ENCODE measurements at regions of chr3 and their contacts with region 1.

Region 1: DNA sequence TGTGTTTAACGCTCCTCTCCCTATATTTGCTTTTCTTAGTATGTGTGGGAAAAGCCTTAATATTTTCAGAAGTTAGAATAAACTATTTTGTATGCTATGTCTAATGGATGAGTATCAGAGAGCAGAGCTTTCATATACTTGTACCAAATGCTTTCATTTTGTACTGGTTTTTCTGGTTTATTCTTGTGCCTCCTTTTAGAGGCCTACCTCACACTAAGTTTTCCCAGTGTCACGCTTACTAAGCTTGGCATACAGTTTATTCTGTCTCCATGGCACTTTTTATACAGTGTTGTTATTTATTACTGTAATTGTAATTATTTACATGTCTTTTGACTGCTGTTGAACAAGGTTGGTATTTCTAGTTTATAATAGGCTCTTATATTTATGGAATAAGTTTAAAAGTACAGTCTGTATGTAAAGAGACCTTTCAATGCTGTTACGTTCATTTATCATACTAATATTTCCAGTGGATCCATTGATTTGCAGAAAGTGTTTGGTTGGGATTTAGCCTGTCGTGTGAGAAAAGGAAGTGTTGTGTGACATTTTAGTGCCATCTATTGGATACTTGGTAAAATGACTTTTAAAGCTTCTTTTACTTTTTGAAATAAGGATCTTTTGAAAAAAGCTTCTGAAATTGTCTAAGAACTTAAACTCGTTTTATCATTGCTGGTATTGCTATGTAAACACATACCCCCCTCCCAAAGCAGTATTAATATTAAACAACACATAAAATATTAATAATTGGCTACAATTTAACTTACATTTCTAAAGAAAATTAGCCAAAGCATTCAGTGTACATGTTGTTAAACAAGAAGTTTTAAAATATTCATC is 5.2 kb upstream of the EBLN2 start:
- DNase-seq: no peak
- H3K4me3 ChIP-seq: no peak overlapping the region
- H3K27ac ChIP-seq: peak overlapping the region in 2 of 4 donors; percentile 42 to 45
- H3K4me1 ChIP-seq: peaks cover 7 to 19% (median 8%) of the 10 kb centered on the region in 3 donors
- H3K27me3 ChIP-seq: no peaks in the 10 kb centered on the region
- CTCF ChIP-seq: peak in 5 of 6 experiments; percentile 28 to 61 (median 41)
- POLR2A ChIP-seq: no peak

Region 2: GRCh38 chr3:72949016-72949415 is 107.2 kb before region 1 on chr3:
- intact Hi-C with region 1: loop called (anchors 10 kb)
- DNase-seq: no peak
- H3K4me3 ChIP-seq: no peak overlapping the region
- H3K27ac ChIP-seq: no peak overlapping the region
- H3K4me1 ChIP-seq: no peaks in the 10 kb centered on the region
- H3K27me3 ChIP-seq: no peaks in the 10 kb centered on the region
- CTCF ChIP-seq: no peak
- POLR2A ChIP-seq: no peak

Region 3: DNA sequence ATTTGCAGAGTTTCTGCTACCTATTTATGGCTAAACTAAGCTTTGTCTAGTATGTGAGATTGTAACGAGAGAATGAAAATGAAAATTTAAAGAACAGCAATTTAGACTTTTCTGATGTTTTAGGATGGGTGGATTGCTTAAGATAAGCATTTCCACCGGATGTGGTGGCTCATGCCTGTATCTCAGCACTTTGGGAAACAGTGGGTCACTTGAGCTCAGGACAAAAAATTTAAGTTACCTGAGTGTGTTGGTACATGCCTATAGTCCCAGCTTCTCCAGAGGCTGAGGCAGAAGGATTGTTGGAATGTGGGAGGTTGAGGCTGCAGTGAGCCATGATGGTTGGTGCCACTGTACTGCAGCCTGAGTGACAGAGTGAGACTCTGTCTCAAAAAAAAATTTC is 56.3 kb before region 1 on chr3:
- intact Hi-C with region 1: no loop called
- DNase-seq: no peak
- H3K4me3 ChIP-seq: peak overlapping the region in 2 of 4 donors; percentile 93 to 94
- H3K27ac ChIP-seq: no peak overlapping the region
- H3K4me1 ChIP-seq: peaks cover 16 to 79% (median 24%) of the 10 kb centered on the region in 3 donors
- H3K27me3 ChIP-seq: no peaks in the 10 kb centered on the region
- CTCF ChIP-seq: no peak
- POLR2A ChIP-seq: no peak